GM12878 (cell line): ENCODE measurements at regions of chr2 and their contacts with region 1.

Region 1: GRCh38 chr2:201130524-201131186 is 14.7 kb downstream of the CFLAR start:
- DNase-seq: no peak
- ATAC-seq: peak; percentile 7
- H3K4me3 ChIP-seq: peak overlapping the region; percentile 88
- H3K27ac ChIP-seq: peak overlapping the region; percentile 99
- H3K4me1 ChIP-seq: peaks cover 23% of the 10 kb centered on the region
- H3K27me3 ChIP-seq: no peaks in the 10 kb centered on the region
- CTCF ChIP-seq: no peak
- EP300 ChIP-seq: no peak; a peak in 1 of 4 replicates
- POLR2A ChIP-seq: no peak
- RAD21 ChIP-seq: no peak

Region 2: DNA sequence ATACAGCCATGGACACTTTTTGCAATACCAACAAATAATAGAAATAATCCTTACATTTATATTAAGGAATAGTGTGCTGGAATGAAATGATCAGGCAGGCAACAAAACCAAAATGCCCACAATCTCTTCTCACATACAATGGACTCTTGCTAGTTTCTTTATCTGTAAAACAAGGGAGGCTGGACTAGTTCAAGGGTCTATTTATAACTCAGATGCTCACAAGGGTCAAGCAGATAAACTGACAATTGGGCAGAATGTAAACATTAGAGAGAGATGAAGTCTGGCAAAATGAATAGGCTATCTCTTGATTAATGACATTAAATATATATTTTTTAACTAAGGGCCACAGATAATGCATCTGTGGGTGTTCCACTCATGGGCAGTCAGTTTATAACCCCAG is 253.2 kb before region 1 on chr2:
- CTCF ChIA-PET with region 1: no interaction called
- POLR2A ChIA-PET with region 1: no interaction called
- RAD21 ChIA-PET with region 1: no interaction called
- SMC1A ChIA-PET with region 1: no interaction called
- in situ Hi-C with region 1: no loop called
- intact Hi-C with region 1: no loop called
- DNase-seq: no peak
- ATAC-seq: no peak
- H3K4me3 ChIP-seq: no peak overlapping the region
- H3K27ac ChIP-seq: no peak overlapping the region
- H3K4me1 ChIP-seq: no peaks in the 10 kb centered on the region
- H3K27me3 ChIP-seq: no peaks in the 10 kb centered on the region
- CTCF ChIP-seq: no peak
- EP300 ChIP-seq: no peak
- POLR2A ChIP-seq: no peak
- RAD21 ChIP-seq: no peak

Region 3: GRCh38 chr2:201057087-201057521 is 73.6 kb before region 1 on chr2:
- CTCF ChIA-PET with region 1: no interaction called
- POLR2A ChIA-PET with region 1: no interaction called
- RAD21 ChIA-PET with region 1: no interaction called
- SMC1A ChIA-PET with region 1: no interaction called
- in situ Hi-C with region 1: no loop called
- intact Hi-C with region 1: no loop called
- DNase-seq: no peak
- ATAC-seq: no peak
- H3K4me3 ChIP-seq: no peak overlapping the region
- H3K27ac ChIP-seq: no peak overlapping the region
- H3K4me1 ChIP-seq: no peaks in the 10 kb centered on the region
- H3K27me3 ChIP-seq: no peaks in the 10 kb centered on the region
- CTCF ChIP-seq: no peak
- EP300 ChIP-seq: no peak
- POLR2A ChIP-seq: no peak
- RAD21 ChIP-seq: no peak

Region 4: GRCh38 chr2:201149064-201149820 is 18.6 kb after region 1 on chr2:
- CTCF ChIA-PET with region 1: interaction called, 9 read pairs
- POLR2A ChIA-PET with region 1: interaction called, 11 read pairs
- RAD21 ChIA-PET with region 1: interaction called, 8 read pairs
- SMC1A ChIA-PET with region 1: interaction called, 22 read pairs
- in situ Hi-C with region 1: no loop called
- intact Hi-C with region 1: no loop called
- DNase-seq: no peak
- ATAC-seq: peak; percentile 5; the same call in 1 of the 3 replicates
- H3K4me3 ChIP-seq: no peak overlapping the region
- H3K27ac ChIP-seq: no peak overlapping the region
- H3K4me1 ChIP-seq: peaks cover 8% of the 10 kb centered on the region; the same call in 1 of the 2 replicates
- H3K27me3 ChIP-seq: no peaks in the 10 kb centered on the region
- CTCF ChIP-seq: no peak
- EP300 ChIP-seq: no peak
- POLR2A ChIP-seq: no peak
- RAD21 ChIP-seq: no peak

Region 5: DNA sequence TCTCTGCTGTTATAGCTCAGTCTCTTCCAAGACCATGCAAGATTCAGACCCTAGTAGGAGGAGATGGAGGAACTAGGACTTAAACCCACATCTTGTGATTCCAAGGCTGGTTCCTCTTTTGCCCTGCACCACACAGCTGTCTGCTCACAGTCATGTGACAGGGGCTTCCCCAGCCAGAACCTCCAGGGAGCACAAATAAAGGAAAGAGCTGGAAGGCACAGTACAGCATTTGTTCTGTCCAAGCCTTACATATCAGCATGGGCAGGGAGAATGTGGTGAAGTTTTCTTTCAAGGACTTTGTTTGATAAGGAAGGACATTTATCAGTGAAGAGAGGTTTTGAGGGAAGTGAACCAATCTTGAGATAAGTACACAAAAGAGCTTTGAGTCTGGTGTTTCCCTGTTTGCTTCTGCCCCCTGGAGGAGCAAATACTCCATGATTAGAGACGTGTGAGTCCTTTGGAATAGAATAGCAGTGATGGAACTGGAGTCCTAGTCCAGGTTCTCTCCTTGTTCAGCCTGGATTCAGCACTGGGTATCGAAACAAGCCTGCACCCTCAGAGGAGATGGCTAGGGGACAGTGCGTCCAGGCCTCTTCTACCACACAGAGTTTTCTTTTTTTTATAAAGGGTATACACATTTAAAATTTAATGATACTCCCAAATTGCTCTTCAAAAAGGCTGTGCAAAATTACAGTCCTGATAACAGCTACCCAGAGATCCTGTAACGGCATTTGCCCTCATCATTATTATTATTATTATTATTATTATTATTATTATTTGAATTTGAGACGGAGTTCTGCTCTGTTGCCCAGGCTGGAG is 27.7 kb after region 1 on chr2:
- CTCF ChIA-PET with region 1: interaction called, 23 read pairs
- POLR2A ChIA-PET with region 1: interaction called, 11 read pairs
- RAD21 ChIA-PET with region 1: interaction called, 52 read pairs
- SMC1A ChIA-PET with region 1: interaction called, 55 read pairs
- in situ Hi-C with region 1: no loop called
- intact Hi-C with region 1: no loop called
- DNase-seq: peak; percentile 77
- ATAC-seq: peak; percentile 98
- H3K4me3 ChIP-seq: no peak overlapping the region
- H3K27ac ChIP-seq: peak overlapping the region; percentile 35
- H3K4me1 ChIP-seq: peaks cover 14% of the 10 kb centered on the region
- H3K27me3 ChIP-seq: no peaks in the 10 kb centered on the region
- CTCF ChIP-seq: peak; percentile 62 to 76 (median 66)
- EP300 ChIP-seq: peak; percentile 59 to 70; a peak in 2 of 4 replicates
- POLR2A ChIP-seq: no peak
- RAD21 ChIP-seq: peak; percentile 77